Activated CD4-positive, alpha-beta T cell treated with anti-CD3 and anti-CD28 coated beads for 36 hours (primary cell): ENCODE measurements at regions of chr12 and their contacts with region 1.

Region 1: GRCh38 chr12:26126340-26127284 is 1.8 kb upstream of the BHLHE41 start:
- DNase-seq: peak; percentile 70
- ATAC-seq: peak; percentile 55
- H3K4me3 Mint-ChIP-seq: peak overlapping the region; percentile 77
- H3K27ac Mint-ChIP-seq: no peak overlapping the region
- H3K4me1 Mint-ChIP-seq: peaks cover 26% of the 10 kb centered on the region
- H3K27me3 Mint-ChIP-seq: peaks cover 72% of the 10 kb centered on the region

Region 2: DNA sequence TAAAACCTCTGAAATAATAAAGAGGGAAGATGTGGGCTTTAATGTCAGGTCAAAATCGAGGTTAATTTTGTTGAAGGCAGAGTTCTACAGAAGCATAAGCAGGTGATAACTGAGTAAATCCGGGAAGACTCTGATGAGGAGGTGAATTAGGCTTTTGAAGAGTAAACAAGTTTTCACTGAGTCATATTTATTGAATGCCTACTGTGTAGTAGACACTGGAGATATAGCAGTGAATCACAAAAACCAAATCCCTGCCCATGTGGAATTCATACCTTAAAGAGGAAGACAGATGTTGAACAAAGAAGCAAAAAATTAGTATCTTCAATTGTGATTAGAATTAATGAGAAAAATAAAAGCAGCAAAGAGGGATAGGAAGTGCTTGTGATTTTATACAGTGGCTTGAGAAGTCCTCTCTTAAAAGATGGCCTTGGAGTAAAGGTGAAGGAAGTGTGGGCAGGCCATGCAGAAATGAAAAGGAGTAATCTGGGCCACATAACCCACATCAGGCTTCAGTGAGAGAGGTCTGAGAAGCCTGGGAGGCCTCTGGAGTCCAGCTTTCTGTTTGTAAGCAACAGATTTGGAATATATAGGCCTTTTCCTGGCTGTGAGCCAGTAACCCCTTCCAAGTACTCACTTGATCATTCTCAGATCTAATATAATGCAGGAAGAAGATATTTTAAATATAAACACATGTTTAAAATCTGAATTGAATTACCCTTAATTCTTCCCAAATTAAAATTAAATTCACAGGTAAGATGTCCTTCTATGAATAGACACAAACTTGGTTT is 48.5 kb before region 1 on chr12:
- CTCF ChIA-PET with region 1: no interaction called
- POLR2A ChIA-PET with region 1: no interaction called
- intact Hi-C with region 1: no loop called
- DNase-seq: no peak
- ATAC-seq: no peak
- H3K4me3 Mint-ChIP-seq: no peak overlapping the region
- H3K27ac Mint-ChIP-seq: no peak overlapping the region
- H3K4me1 Mint-ChIP-seq: no peaks in the 10 kb centered on the region
- H3K27me3 Mint-ChIP-seq: peaks cover 2% of the 10 kb centered on the region

Region 3: GRCh38 chr12:26113853-26114719 is 12.5 kb before region 1 on chr12:
- CTCF ChIA-PET with region 1: interaction called, 11 read pairs
- POLR2A ChIA-PET with region 1: no interaction called
- intact Hi-C with region 1: loop called in 1 of 2 experiments (anchors 1 kb)
- DNase-seq: peak; percentile 87
- ATAC-seq: peak; percentile 88
- H3K4me3 Mint-ChIP-seq: peak overlapping the region; percentile 69
- H3K27ac Mint-ChIP-seq: peak overlapping the region; percentile 25
- H3K4me1 Mint-ChIP-seq: peaks cover 11% of the 10 kb centered on the region
- H3K27me3 Mint-ChIP-seq: peaks cover 37% of the 10 kb centered on the region

Region 4: GRCh38 chr12:26195641-26196420 is 69.2 kb after region 1 on chr12:
- CTCF ChIA-PET with region 1: no interaction called
- POLR2A ChIA-PET with region 1: no interaction called
- intact Hi-C with region 1: loop called in 1 of 2 experiments (anchors 1 kb)
- DNase-seq: peak; percentile 20
- ATAC-seq: no peak
- H3K4me3 Mint-ChIP-seq: peak overlapping the region; percentile 63
- H3K27ac Mint-ChIP-seq: no peak overlapping the region
- H3K4me1 Mint-ChIP-seq: peaks cover 6% of the 10 kb centered on the region
- H3K27me3 Mint-ChIP-seq: peaks cover 42% of the 10 kb centered on the region

Region 5: GRCh38 chr12:26226629-26227360 is 100.2 kb after region 1 on chr12:
- CTCF ChIA-PET with region 1: no interaction called
- POLR2A ChIA-PET with region 1: no interaction called
- intact Hi-C with region 1: loop called in 1 of 2 experiments (anchors 10 kb)
- DNase-seq: peak; percentile 21
- ATAC-seq: no peak
- H3K4me3 Mint-ChIP-seq: no peak overlapping the region
- H3K27ac Mint-ChIP-seq: no peak overlapping the region
- H3K4me1 Mint-ChIP-seq: no peaks in the 10 kb centered on the region
- H3K27me3 Mint-ChIP-seq: peaks cover 33% of the 10 kb centered on the region

Region 6: GRCh38 chr12:26274441-26275312 is 148.1 kb after region 1 on chr12:
- CTCF ChIA-PET with region 1: no interaction called
- POLR2A ChIA-PET with region 1: no interaction called
- intact Hi-C with region 1: loop called in 1 of 2 experiments (anchors 2 kb)
- DNase-seq: peak; percentile 81
- ATAC-seq: peak; percentile 99
- H3K4me3 Mint-ChIP-seq: no peak overlapping the region
- H3K27ac Mint-ChIP-seq: peak overlapping the region; percentile 35
- H3K4me1 Mint-ChIP-seq: peaks cover 26% of the 10 kb centered on the region
- H3K27me3 Mint-ChIP-seq: peaks cover 8% of the 10 kb centered on the region

Region 7: DNA sequence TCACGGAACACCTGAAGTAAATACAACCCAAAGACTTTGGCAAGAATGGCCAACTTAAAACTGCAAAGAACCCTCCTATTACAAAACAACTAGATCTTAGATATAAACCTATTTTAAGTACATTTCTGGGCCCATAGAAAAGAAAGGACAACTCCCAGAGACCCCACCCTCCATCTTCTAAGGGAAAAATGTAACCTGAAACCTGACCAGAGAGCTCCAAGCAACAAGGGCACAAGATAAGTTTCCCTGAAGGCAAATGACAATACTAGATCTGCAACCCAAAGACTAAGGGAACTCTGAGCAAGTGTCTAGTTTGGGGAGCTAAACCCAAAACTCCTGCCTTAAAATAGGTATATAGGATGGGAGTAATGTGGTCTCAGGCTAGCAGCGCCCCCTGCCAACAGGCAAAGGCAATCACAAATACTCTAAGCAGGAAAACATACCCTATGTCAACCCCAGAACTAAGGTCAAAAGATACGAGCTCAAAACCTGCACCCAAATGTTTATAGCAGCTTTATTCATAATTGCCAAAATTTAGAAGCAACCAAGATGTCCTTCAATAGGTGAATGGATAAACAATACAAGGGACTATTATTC is 487.5 kb after region 1 on chr12:
- CTCF ChIA-PET with region 1: no interaction called
- POLR2A ChIA-PET with region 1: no interaction called
- intact Hi-C with region 1: loop called in 1 of 2 experiments (anchors 5 kb)
- DNase-seq: peak; percentile 57
- ATAC-seq: no peak
- H3K4me3 Mint-ChIP-seq: no peak overlapping the region
- H3K27ac Mint-ChIP-seq: no peak overlapping the region
- H3K4me1 Mint-ChIP-seq: no peaks in the 10 kb centered on the region
- H3K27me3 Mint-ChIP-seq: no peaks in the 10 kb centered on the region